Astrocyte of the cerebellum (primary cell): ENCODE measurements at regions of chr9 and their contacts with region 1.

Region 1: DNA sequence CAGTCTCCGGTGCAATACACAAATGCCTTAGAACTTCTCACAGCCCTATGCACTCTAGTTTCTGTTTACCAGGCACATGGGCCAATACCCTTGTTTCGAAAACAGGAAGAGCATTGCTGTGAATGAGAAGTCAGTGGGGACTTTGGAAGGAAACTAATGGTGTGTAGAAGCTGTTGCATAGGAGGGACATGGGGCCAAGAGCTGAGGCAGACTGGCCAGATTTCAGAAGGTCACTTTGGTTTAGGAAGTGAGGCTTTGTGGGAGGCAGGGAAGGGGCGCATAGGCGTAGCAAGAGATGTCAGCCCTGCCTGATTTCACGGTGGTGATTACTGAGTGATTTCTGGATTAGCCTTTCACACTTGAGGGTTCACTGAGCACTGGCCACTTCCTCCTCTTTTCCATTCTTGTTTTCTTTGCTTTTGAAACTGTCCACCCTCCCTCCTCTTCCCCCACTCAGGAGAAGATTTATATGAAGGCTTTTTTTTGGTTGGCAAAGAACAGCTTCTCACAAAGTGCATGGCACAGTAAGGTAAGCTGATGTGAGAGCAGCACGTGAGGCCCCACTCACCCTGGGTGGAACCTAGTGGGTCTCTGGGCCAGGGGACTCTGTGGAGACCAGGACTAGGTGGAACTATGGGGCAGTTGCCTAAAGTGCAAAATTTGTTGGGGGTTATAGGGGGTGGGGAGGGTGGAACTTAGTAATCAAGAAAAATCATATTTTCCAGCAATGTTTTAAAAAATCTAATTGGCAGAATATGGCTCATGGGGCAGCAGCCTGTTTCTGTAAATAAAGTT is 6.1 kb upstream of the TMEM252 start:
- DNase-seq: no peak
- H3K4me3 ChIP-seq: no peak overlapping the region
- CTCF ChIP-seq: no peak

Region 2: GRCh38 chr9:68895741-68896478 is 349.1 kb after region 1 on chr9:
- in situ Hi-C with region 1: loop called (anchors 25 kb)
- DNase-seq: no peak
- H3K4me3 ChIP-seq: no peak overlapping the region
- CTCF ChIP-seq: no peak